HEK293 (cell line): ENCODE measurements at regions of chr11 and their contacts with region 1.

Region 1: GRCh38 chr11:12599408-12600143 is 74.6 kb upstream of the TEAD1 start:
- H3K4me3 ChIP-seq: no peak overlapping the region
- H3K27ac ChIP-seq: no peak overlapping the region
- H3K4me1 ChIP-seq: no peaks in the 10 kb centered on the region; the same call in 1 of the 2 replicates
- CTCF ChIP-seq: no peak

Region 2: DNA sequence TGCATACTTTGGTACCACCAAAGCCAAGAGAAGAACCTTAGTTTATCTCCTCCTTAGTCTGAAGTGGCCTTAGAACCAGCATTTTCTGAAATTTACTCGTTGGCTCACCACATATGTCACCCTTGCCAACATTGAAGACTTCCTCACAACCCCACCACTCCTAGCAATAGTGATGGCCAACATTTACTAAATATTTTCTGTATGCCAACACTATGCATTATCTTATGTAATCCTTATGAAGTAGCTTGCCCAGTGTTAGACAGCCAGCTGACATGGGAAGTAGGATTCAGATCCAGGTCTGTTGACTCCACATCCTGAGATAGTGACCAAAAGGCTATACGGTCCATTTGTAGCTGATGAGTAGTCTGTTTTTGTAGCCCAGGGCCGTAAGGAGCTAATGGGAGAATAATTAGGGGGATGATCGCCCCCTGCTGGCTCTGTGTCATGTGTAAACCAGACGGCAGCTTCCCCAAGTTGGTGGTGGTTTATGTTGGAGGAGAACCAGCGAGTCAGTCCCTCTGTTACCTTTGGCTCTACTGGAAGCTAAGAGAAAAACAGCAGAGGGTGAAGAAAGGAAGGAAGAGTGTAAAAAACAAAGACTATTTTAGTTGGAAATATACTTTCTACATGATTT is 289.1 kb after region 1 on chr11:
- CTCF ChIA-PET with region 1: interaction called, 14 read pairs
- POLR2A ChIA-PET with region 1: no interaction called
- H3K4me3 ChIP-seq: no peak overlapping the region
- H3K27ac ChIP-seq: no peak overlapping the region
- H3K4me1 ChIP-seq: no peaks in the 10 kb centered on the region
- CTCF ChIP-seq: peak; percentile 46; the same call in 1 of the 2 replicates

Region 3: GRCh38 chr11:12893787-12894672 is 294.5 kb after region 1 on chr11:
- CTCF ChIA-PET with region 1: interaction called, 14 read pairs
- POLR2A ChIA-PET with region 1: no interaction called
- H3K4me3 ChIP-seq: no peak overlapping the region
- H3K27ac ChIP-seq: no peak overlapping the region
- H3K4me1 ChIP-seq: no peaks in the 10 kb centered on the region
- CTCF ChIP-seq: no peak

Region 4: DNA sequence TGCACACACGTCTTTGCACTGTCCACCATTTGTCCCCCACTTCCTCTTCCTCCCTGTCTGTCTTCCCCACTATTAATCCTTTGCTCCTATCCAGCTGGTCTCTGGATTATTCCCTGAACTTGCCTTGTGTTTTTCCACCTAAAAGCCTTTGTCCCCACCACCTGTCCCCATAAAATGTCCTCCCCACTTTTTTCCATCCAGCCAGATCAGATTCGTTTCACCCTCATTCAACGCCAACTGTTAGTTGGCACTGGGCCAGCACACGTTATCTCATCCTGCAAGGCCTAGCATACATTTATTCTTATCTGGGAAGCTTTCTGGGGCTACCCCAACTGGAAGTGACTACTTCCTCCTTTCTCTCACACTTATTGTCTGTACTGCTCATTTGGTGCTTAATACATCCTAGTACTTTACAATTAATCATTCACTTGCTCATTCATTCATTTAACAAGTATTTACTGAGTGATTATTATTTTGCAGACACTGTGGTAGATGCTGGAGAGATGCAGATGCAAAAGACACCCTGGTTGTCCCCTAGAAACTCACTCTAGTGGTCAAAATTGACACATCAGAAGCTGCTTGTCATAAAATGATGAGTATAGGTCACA is 505.8 kb after region 1 on chr11:
- CTCF ChIA-PET with region 1: no interaction called
- POLR2A ChIA-PET with region 1: no interaction called
- H3K4me3 ChIP-seq: no peak overlapping the region
- H3K27ac ChIP-seq: no peak overlapping the region
- H3K4me1 ChIP-seq: no peaks in the 10 kb centered on the region
- CTCF ChIP-seq: no peak